Ovary (tissue), 10 donors: ENCODE measurements at regions of chr17 and their contacts with region 1.

Region 1: DNA sequence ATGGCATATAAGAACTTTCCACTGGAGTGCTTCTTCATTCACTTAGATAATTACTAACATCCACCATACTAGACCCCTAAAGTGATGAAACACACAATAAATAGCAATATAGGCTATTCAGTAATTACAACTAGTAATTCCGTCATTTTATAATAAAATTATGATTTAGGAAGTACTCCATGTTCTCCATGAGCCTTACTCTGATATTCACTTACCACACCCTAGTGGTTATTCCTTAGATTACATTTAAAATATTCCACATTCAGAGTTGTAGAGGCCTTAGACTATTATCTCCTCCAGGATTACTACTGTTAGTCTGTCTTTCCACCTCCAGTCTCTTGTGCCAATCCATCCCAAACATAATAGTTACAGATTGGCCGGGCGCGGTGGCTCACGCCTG is 62.4 kb downstream of the STH start:
- DNase-seq: no peak
- H3K4me3 ChIP-seq: no peak overlapping the region
- H3K27ac ChIP-seq: no peak overlapping the region
- H3K4me1 ChIP-seq: no peaks in the 10 kb centered on the region
- H3K27me3 ChIP-seq: no peaks in the 10 kb centered on the region
- CTCF ChIP-seq: no peak
- EP300 ChIP-seq: no peak
- POLR2A ChIP-seq: no peak

Region 2: GRCh38 chr17:44466339-44466738 is 1595.1 kb before region 1 on chr17:
- intact Hi-C with region 1: loop called in 1 of 4 experiments (anchors 5 kb)
- DNase-seq: no peak
- H3K4me3 ChIP-seq: no peak overlapping the region
- H3K27ac ChIP-seq: no peak overlapping the region
- H3K4me1 ChIP-seq: peaks cover 5% of the 10 kb centered on the region
- H3K27me3 ChIP-seq: no peaks in the 10 kb centered on the region
- CTCF ChIP-seq: no peak
- EP300 ChIP-seq: no peak
- POLR2A ChIP-seq: no peak

Region 3: DNA sequence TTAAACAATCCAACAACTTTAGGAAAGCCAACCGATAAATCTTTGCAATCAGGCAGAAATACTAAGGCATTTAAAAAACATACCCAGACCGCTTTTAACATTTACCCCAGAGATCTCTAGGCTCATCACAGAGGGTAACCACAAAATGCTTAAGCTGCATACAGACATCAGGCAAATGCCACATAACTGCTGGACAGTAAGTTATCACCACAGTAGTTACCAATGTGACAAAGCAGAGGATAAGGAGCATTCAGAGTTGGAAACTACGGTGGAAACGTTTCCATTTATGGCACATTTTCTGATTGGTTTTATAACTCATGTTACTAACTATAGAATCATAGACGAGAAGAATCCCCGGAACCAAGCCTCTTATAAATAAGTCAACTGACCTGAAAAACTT is 54.3 kb after region 1 on chr17:
- intact Hi-C with region 1: loop called in 1 of 4 experiments (anchors 10 kb)
- DNase-seq: no peak
- H3K4me3 ChIP-seq: no peak overlapping the region
- H3K27ac ChIP-seq: no peak overlapping the region
- H3K4me1 ChIP-seq: peaks cover 26% of the 10 kb centered on the region
- H3K27me3 ChIP-seq: no peaks in the 10 kb centered on the region
- CTCF ChIP-seq: no peak
- EP300 ChIP-seq: no peak
- POLR2A ChIP-seq: no peak

Region 4: DNA sequence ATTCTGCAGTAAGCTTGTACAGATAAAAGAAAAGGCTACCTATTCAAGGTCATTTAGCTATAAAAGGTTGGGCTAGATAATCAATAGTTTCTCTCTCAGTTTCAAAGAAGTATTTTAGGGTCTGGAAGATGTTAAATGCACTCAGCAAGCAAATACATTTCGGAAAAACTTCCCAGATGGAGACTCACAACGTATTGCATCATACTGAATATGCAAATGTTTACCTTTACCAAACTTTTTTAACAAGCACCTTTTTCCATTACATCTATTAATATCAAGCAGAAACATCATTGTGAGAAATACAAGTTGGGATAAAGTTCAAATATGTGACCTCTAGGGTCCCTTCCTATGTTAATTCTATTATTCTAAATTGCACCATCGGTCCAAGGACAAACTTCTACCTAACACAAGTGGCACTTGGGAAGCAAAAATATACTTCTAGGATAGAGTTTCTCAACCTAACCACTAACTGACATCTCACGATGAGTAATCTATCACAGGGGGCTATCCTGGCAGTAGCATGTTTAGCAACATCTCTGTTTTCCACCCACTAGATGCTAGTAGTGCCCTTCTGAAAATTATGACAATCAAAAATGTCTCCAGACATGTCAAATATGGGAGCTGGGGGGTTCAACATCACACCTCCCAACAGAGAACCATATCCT is 117.2 kb after region 1 on chr17:
- intact Hi-C with region 1: no loop called
- DNase-seq: no peak
- H3K4me3 ChIP-seq: no peak overlapping the region
- H3K27ac ChIP-seq: no peak overlapping the region
- H3K4me1 ChIP-seq: peaks cover 26% of the 10 kb centered on the region
- H3K27me3 ChIP-seq: no peaks in the 10 kb centered on the region
- CTCF ChIP-seq: no peak
- EP300 ChIP-seq: no peak
- POLR2A ChIP-seq: no peak